Activated CD8-positive, alpha-beta T cell treated with anti-CD3 and anti-CD28 coated beads, Interleukin-2, amount 10 ng/mL, durations not matched to agents 7 days and 5 days (primary cell): ENCODE measurements at regions of chr3 and their contacts with region 1.

Region 1: DNA sequence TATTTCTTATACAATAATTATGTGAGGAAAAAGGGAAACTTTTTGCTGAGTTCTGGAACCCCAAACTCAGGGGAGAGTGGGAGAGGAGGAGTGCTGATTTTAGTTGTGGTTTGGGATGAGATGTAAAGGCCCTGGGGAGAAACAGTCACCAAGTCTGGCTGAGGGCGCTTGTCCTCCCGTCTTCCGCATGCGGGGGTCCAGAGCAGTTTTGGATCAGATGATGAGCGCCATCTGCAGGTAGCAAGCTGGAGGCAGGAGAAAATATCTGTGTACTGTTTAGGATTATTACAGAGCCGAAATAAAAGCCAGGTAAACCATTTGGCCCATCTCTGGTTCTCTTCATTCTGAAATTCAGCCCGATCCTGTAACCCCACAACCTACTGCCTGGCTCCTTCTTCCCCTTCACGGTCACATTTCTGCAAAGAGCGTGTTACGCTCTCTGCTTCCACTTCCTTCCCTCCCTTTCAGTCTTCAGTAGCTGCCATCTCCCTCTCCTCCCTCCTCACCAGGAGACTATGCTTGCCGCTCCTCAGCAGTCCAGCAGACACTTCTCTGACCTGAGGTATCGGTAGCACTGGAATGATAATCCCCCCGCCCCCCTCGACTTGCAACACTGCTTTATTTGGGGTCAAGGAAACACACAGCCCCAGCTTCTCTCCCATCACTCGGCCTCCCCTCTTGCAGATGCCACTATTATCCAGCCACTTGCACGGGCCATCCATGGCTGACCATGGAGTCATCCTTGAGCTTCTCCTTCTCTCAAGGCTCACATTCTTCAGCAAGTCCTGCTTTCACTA is 1.4 kb upstream of the PARP14 start:
- DNase-seq: peak; percentile 92
- ATAC-seq: peak; percentile 64
- H3K4me3 Mint-ChIP-seq: peak overlapping the region; percentile 94
- H3K27ac Mint-ChIP-seq: peak overlapping the region; percentile 94
- H3K4me1 Mint-ChIP-seq: peaks cover 56% of the 10 kb centered on the region
- H3K27me3 Mint-ChIP-seq: no peaks in the 10 kb centered on the region

Region 2: DNA sequence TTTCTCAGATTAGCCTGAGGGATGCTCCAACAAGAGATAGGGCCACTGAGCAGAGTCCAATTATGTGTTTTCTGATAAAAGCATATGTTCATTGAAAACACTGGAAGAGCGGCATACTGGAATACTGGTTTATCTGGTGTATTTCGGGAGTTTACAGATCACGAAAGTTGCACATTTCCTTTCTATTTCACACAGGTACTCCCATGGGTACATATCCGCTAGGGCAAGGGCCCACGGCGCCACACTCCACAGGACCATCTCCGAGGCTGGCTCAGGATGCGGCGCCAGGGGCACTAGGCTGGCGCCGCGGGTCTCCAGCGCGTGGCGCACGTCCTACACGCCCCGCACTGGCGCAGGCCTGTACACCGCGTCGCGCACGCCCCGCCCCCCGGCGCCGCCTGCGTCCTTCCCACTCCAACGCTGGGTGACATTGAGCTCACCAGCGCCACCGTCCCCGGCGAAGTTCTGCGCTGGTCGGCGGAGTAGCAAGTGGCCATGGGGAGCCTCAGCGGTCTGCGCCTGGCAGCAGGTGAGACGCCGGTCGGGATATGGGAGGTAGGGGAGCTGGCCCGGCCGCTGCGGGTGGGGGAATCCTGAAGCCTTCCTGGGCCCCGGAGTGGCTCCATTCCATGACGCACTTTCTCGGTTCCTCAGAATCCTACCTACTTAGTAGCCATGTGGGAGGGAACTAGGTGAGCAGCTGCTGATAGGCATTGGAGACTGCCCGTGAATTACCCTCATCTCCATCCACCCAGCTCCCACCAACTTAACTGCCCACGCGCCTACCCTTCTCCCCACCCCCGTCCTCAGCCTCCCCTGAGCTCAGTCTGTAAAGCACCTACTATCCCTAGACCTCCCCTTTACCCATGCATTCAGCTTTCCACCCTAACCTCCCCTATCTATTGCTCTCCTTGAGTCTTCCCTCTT is 295.2 kb before region 1 on chr3 and contains the start of gene FAM162A:
- CTCF ChIA-PET with region 1: interaction called, 53 read pairs
- POLR2A ChIA-PET with region 1: interaction called, 13 read pairs
- DNase-seq: peak; percentile 96
- ATAC-seq: peak; percentile 98
- H3K4me3 Mint-ChIP-seq: peak within 1 kb of the TSS; percentile 90
- H3K27ac Mint-ChIP-seq: peak within 1 kb of the TSS; percentile 91
- H3K4me1 Mint-ChIP-seq: peaks cover 58% of the 10 kb centered on the region
- H3K27me3 Mint-ChIP-seq: no peaks in the 10 kb centered on the region
- total RNA-seq, gene FAM162A: 78.0 to 78.4 TPM

Region 3: DNA sequence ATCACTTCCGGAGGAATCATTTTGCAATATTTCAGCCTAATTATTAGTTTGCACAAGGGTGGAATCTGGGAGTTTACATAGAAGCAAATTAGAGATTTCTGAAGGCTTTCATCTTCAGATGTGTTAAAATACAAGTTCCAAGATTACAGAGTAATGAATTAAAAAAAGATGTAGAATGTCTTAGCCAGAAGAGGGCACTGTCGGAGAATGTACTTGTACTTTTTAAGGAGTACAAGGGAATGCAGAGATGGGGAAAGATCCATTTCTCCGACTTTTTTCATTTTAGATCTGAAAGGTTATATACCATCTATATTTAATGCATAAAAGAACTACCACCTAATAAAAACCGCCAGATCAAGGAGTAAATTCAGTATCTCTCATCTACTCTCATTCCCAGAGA is 220.3 kb before region 1 on chr3:
- CTCF ChIA-PET with region 1: interaction called, 13 read pairs
- POLR2A ChIA-PET with region 1: interaction called, 3 read pairs
- DNase-seq: no peak
- ATAC-seq: no peak
- H3K4me3 Mint-ChIP-seq: no peak overlapping the region
- H3K27ac Mint-ChIP-seq: no peak overlapping the region
- H3K4me1 Mint-ChIP-seq: no peaks in the 10 kb centered on the region
- H3K27me3 Mint-ChIP-seq: no peaks in the 10 kb centered on the region

Region 4: DNA sequence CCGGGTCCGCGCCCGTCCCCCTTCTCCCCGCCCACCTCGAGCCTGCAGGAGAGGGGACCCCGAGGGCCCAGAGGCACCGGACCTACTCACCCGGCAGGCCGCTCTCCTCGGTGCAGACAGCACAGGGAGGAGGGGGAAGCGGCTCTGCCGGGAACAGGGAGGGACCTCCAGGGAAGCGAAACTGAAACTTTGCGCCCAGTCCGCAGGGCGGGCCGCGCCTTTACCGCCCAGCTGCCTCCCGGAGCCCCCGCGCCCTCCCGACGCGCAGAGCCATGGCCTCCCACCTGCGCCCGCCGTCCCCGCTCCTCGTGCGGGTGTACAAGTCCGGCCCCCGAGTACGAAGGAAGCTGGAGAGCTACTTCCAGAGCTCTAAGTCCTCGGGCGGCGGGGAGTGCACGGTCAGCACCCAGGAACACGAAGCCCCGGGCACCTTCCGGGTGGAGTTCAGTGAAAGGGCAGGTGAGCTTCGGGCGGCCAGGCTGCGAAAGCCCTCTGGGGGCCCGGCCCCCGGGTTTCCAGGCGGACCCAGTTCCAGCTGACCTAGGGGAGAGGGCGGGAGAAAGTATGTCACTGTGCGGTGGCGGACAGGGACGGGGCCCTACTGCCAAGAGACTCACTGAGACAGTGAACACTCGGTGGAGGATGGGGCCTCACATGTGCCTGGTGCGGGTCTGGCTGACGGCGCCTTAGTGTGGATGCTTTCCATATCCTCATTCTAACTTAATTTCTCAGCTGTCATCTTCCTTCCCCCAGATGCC is 114.9 kb before region 1 on chr3 and contains the starts of genes DTX3L and PARP9:
- CTCF ChIA-PET with region 1: interaction called, 248 read pairs
- POLR2A ChIA-PET with region 1: interaction called, 101 read pairs
- DNase-seq: peak; percentile 91
- ATAC-seq: peak; percentile 95
- H3K4me3 Mint-ChIP-seq: peak within 1 kb of the TSS; percentile 98
- H3K27ac Mint-ChIP-seq: peak within 1 kb of the TSS; percentile 99
- H3K4me1 Mint-ChIP-seq: peaks cover 68% of the 10 kb centered on the region
- H3K27me3 Mint-ChIP-seq: no peaks in the 10 kb centered on the region
- total RNA-seq, gene DTX3L: 124 to 127 TPM
- total RNA-seq, gene PARP9: 115 to 118 TPM

Region 5: DNA sequence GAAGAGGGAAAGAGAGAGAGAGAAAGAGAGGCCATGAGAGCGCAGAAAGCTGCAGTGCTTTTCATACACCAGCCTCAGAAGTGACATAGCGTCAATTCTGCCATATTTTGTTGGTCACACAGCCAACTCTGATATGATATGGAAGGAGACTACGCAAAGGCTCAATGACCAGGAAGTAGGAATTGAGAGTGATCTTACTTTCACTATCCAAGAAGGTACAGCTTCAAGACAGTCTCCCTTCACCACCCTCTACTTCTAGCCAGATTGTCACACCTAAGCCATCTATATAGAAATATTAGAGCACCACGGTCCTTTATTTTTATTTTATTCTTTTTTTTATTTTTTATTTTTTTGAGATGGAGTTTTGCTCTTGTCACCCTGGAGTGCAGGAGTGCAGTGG is 80.7 kb before region 1 on chr3:
- CTCF ChIA-PET with region 1: interaction called, 12 read pairs
- POLR2A ChIA-PET with region 1: no interaction called
- DNase-seq: no peak
- ATAC-seq: no peak
- H3K4me3 Mint-ChIP-seq: no peak overlapping the region
- H3K27ac Mint-ChIP-seq: peak overlapping the region; percentile 68
- H3K4me1 Mint-ChIP-seq: peaks cover 8% of the 10 kb centered on the region
- H3K27me3 Mint-ChIP-seq: no peaks in the 10 kb centered on the region